ENCODE measurements at regions of chr2 and their contacts with region 1.

Region 1: DNA sequence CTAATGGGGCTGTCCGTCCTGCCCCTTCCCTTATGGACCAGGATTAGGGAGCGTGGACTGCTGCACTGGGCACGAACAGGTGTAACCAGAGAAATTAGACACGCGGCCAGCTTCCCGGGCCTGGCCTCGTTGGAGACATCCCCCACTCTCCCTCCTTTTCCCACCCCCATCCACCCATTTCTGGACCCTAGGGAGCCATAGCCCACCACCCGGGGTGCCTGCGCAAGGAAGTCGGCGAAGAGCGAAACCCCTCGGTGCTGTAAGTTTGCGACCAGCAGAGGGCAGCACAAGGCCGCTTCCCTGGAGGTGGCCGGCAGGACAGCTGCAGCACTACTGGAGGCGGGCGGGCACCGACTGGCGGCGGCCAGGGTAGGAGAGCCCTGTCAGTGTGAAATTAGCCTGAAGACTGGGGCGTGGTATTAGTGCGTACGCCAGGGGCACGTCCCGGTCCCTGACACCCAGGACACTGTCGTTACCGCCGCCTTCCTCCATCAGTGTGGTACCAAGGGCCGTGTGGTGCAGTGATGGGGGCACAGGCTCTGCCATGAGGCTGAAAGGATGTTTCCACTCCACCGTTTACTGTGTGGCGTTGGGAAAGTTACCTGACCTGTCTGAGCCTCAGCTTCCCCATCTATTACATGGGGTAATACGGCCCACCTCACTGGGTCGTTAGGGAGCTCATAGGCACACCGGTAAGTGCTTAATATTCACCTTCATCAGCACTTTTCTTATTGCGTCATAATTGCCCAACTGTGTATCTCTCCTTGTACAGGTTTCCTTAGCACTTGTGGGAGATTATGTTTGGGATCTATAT is 36.0 kb upstream of the CD207 start:
- DNase-seq: peak; percentile 92
- ATAC-seq: peak; percentile 96
- H3K4me3 Mint-ChIP-seq: no peak overlapping the region
- H3K27ac Mint-ChIP-seq: no peak overlapping the region
- H3K4me1 Mint-ChIP-seq: peaks cover 5% of the 10 kb centered on the region
- H3K27me3 Mint-ChIP-seq: peaks cover 41% of the 10 kb centered on the region

Region 2: GRCh38 chr2:70656421-70657010 is 215.1 kb before region 1 on chr2:
- CTCF ChIA-PET with region 1: interaction called, 4 read pairs
- POLR2A ChIA-PET with region 1: no interaction called
- intact Hi-C with region 1: loop called in 1 of 2 experiments (anchors 5 kb)
- DNase-seq: peak; percentile 57
- ATAC-seq: peak; percentile 61
- H3K4me3 Mint-ChIP-seq: no peak overlapping the region
- H3K27ac Mint-ChIP-seq: peak overlapping the region; percentile 29
- H3K4me1 Mint-ChIP-seq: peaks cover 32% of the 10 kb centered on the region
- H3K27me3 Mint-ChIP-seq: no peaks in the 10 kb centered on the region

Region 3: DNA sequence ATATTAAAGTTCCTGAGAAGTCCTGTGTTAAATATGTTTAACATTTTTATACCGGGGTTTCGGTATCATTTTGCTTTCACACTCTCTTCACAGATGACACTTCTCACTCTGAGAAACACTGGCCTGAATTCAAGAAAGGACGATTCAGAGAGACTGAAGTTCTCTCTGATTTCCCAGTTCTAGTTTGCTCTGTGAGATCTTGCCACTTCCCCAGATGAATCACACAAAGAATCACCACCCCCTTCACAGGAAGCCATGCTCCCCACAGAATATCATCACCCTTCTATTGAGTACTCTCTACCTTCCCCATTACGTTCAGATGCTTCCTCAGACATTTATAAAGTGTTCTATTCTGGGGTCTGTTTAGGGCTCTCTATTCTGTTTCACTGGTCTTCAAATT is 19.9 kb before region 1 on chr2:
- CTCF ChIA-PET with region 1: interaction called, 19 read pairs
- POLR2A ChIA-PET with region 1: no interaction called
- intact Hi-C with region 1: no loop called
- DNase-seq: peak; percentile 59
- ATAC-seq: peak; percentile 99
- H3K4me3 Mint-ChIP-seq: peak overlapping the region; percentile 1
- H3K27ac Mint-ChIP-seq: peak overlapping the region; percentile 85
- H3K4me1 Mint-ChIP-seq: peaks cover 29% of the 10 kb centered on the region
- H3K27me3 Mint-ChIP-seq: peaks cover 2% of the 10 kb centered on the region

Region 4: DNA sequence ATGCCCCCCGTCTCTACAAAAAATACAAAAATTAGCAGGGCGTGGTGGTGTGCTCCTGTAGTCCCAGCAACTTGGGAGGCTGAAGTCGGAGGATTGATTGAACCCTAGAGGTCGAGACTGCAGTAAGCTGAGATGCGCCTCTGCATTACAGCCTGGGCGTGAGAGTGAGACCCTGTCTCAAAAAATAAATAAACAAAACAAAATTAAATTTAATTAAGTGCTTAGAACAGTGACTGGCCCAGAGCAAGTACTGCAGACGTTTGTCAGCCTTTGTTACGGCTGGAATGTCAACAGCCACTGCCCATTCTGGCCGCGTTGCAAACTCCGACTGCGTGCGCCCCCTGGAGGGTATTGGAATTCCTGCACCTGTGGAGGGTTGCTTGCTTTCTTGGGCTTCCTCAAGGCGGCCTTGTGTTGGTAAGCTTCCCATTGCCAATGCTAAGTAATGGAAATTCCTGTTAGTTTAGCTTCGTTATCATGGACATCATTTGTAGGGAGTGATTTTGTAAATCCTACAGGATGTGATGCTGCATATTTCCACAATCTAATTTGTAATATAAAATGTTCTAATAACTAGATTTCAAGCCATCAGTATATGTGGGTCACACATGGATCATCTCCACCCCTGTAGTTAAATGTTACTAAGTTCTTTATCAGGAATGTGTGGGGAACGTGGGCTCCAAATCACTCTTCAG is 48.2 kb after region 1 on chr2:
- CTCF ChIA-PET with region 1: interaction called, 54 read pairs
- POLR2A ChIA-PET with region 1: no interaction called
- intact Hi-C with region 1: loop called (anchors 1 kb)
- DNase-seq: peak; percentile 86
- ATAC-seq: peak; percentile 74
- H3K4me3 Mint-ChIP-seq: no peak overlapping the region
- H3K27ac Mint-ChIP-seq: no peak overlapping the region
- H3K4me1 Mint-ChIP-seq: no peaks in the 10 kb centered on the region
- H3K27me3 Mint-ChIP-seq: peaks cover 14% of the 10 kb centered on the region

Region 5: GRCh38 chr2:70948337-70949003 is 76.9 kb after region 1 on chr2:
- CTCF ChIA-PET with region 1: interaction called, 75 read pairs
- POLR2A ChIA-PET with region 1: no interaction called
- intact Hi-C with region 1: loop called (anchors 1 kb)
- DNase-seq: peak; percentile 89
- ATAC-seq: peak; percentile 94
- H3K4me3 Mint-ChIP-seq: peak overlapping the region; percentile 64
- H3K27ac Mint-ChIP-seq: peak overlapping the region; percentile 20
- H3K4me1 Mint-ChIP-seq: peaks cover 17% of the 10 kb centered on the region
- H3K27me3 Mint-ChIP-seq: peaks cover 13% of the 10 kb centered on the region

Region 6: DNA sequence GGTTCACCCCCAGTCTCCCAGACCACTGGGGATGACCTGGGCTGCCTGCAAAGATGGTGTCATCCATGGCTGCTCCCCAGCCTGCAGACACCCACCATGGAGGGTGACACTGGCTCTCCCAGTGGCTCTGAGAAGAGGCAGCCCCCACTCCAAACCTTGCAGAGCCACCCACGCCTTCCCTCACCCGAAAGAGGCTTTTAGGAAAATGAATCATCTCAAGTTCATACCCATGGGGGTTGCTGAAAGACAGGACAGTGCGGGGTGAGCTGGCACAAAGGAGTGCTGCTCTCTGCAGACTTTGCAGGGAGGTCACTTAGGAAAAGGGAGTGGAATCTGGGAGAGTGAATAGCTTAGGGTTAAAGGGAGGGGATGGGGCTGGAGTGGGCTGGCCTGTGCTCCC is 295.2 kb after region 1 on chr2:
- CTCF ChIA-PET with region 1: no interaction called
- POLR2A ChIA-PET with region 1: no interaction called
- intact Hi-C with region 1: no loop called
- DNase-seq: peak; percentile 29
- ATAC-seq: peak; percentile 23
- H3K4me3 Mint-ChIP-seq: no peak overlapping the region
- H3K27ac Mint-ChIP-seq: no peak overlapping the region
- H3K4me1 Mint-ChIP-seq: no peaks in the 10 kb centered on the region
- H3K27me3 Mint-ChIP-seq: peaks cover 7% of the 10 kb centered on the region